Activated CD4-positive, alpha-beta memory T cell treated with anti-CD3 and anti-CD28 coated beads, Interleukin-2, amount 10 ng/mL, durations not matched to agents 7 days and 5 days (primary cell): ENCODE measurements at regions of chr6 and their contacts with region 1.

Region 1: DNA sequence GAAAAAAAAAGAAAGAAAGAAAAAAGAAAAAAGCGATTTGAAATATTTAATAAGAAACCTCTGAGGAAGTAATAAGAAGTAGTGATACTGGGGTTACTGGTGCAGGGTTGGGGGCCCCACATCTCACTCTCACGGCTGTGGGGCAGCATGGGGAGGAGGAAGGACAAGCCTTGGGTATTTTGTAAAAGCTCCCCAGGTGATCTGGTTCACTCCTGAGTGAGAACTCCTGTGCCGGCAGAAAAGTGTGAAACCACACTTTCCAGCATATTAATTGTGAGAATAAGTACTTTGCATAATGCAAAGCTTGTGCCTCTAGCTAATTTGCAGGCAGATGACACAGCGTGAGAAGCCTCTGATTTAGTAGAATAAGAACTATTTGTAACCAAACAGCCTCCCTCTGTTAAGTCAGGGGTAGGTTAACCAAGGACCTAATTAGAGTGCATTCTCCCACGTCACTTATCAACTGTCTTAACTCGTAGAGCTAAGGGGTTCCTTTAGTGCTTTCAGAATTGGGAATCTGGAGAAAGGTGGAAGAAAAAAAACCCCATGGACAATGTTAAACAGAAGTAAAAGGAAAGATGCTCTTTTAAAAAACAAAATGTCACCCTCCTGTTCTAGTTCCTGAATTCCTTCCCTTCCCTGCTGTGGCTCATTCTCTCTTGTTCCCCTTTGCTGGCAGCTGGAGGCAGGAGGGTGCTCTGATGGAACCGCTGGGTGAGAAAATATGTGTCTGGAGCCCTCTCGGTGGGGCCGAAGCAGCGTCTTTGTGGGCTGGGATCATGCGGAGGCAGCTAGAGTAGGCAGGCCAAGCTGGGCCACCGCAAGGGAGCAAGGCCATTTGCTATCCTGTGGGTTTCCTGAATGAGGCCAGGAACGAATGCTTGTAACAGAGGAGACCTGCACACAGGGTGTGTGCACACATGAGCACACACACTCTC is 108.7 kb downstream of the FYN start:
- DNase-seq: peak; percentile 67
- H3K4me3 Mint-ChIP-seq: peak overlapping the region; percentile 57
- H3K27ac Mint-ChIP-seq: peak overlapping the region; percentile 95
- H3K4me1 Mint-ChIP-seq: peaks cover 99% of the 10 kb centered on the region
- H3K27me3 Mint-ChIP-seq: no peaks in the 10 kb centered on the region

Region 2: GRCh38 chr6:111750753-111751684 is 13.5 kb before region 1 on chr6:
- CTCF ChIA-PET with region 1: interaction called, 13 read pairs
- POLR2A ChIA-PET with region 1: interaction called, 37 read pairs
- DNase-seq: peak; percentile 75
- H3K4me3 Mint-ChIP-seq: peak overlapping the region; percentile 52
- H3K27ac Mint-ChIP-seq: peak overlapping the region; percentile 98
- H3K4me1 Mint-ChIP-seq: peaks cover 93% of the 10 kb centered on the region
- H3K27me3 Mint-ChIP-seq: no peaks in the 10 kb centered on the region

Region 3: GRCh38 chr6:111793711-111794111 is 29.2 kb after region 1 on chr6:
- CTCF ChIA-PET with region 1: interaction called, 4 read pairs
- POLR2A ChIA-PET with region 1: interaction called, 10 read pairs
- DNase-seq: peak; percentile 68
- H3K4me3 Mint-ChIP-seq: peak overlapping the region; percentile 73
- H3K27ac Mint-ChIP-seq: peak overlapping the region; percentile 87
- H3K4me1 Mint-ChIP-seq: peaks cover 65% of the 10 kb centered on the region
- H3K27me3 Mint-ChIP-seq: no peaks in the 10 kb centered on the region

Region 4: GRCh38 chr6:111823831-111824607 is 59.5 kb after region 1 on chr6:
- CTCF ChIA-PET with region 1: no interaction called
- POLR2A ChIA-PET with region 1: interaction called, 12 read pairs
- DNase-seq: no peak
- H3K4me3 Mint-ChIP-seq: peak overlapping the region; percentile 18
- H3K27ac Mint-ChIP-seq: peak overlapping the region; percentile 58
- H3K4me1 Mint-ChIP-seq: peaks cover 52% of the 10 kb centered on the region
- H3K27me3 Mint-ChIP-seq: no peaks in the 10 kb centered on the region

Region 5: DNA sequence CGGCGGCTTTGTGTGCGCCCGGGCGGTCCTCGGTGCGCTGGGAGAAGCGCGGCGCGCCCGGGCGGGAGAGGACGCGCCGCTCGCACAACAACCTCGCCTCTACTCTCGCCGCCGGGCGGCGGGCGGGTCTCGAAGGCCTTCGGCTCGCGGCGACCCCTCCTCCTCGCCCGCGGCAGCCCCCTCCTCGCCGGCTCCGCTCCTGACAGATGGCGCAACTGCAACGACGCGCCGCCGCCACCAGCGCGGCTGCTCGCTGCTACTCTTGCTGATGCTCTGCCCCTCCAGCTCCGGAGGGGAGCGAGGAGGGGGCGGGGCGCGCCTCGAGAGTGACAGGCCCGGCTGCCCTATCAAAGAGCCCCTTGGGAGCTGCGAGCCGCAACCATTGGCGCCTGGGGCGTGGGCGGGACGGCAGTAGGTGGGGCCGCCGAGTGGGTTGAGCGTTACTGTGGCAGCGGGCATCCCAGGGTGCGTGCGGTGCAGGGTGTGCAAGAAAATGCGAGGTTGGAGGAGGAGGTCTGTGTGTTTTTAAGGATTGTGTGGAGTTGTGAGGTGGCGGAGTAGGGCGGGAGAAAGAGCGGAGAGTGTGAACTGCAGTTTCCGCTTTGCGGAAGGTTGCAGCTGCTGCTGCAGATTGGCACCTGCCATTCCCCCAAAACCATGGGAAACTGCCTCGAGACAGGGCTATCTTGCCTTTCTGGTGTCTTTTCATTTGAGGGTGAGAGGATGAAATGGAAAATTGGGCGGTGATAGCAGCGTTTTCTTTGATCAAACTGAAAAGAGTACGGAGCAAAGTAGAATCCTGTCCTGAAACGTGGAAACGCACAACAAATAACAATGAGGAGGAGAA is 108.9 kb after region 1 on chr6 and contains the start of gene FYN:
- CTCF ChIA-PET with region 1: interaction called, 8 read pairs
- POLR2A ChIA-PET with region 1: interaction called, 10 read pairs
- DNase-seq: peak; percentile 99
- H3K4me3 Mint-ChIP-seq: peak within 1 kb of the TSS; percentile 96
- H3K27ac Mint-ChIP-seq: peak within 1 kb of the TSS; percentile 93
- H3K4me1 Mint-ChIP-seq: peaks cover 41% of the 10 kb centered on the region
- H3K27me3 Mint-ChIP-seq: no peaks in the 10 kb centered on the region
- total RNA-seq, gene FYN: 201 to 208 TPM